ENCODE measurements at regions of chrX and their contacts with region 1.

Region 1: DNA sequence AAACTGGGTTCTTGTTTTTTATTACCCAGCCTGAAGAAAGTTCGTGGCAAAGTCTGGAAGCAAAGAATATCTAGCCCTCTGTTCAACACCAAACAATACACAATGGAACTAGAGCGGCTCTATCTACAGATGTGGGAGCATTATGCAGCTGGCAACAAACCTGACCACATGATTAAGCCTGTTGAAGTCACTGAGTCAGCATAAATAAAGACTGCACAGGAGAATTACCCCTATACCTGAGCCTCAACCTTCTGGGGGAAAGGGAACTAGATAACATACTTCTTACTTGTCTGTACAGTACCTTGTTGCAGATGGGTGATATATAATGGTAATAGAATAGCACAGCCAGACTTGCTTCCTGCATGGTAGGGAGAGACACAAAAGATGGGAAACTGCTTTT is 4.6 kb upstream of the GCNA start:
- DNase-seq: no peak
- H3K4me3 Mint-ChIP-seq: no peak overlapping the region
- H3K27ac Mint-ChIP-seq: peak overlapping the region; percentile 1
- H3K4me1 Mint-ChIP-seq: no peaks in the 10 kb centered on the region
- H3K27me3 Mint-ChIP-seq: no peaks in the 10 kb centered on the region

Region 2: DNA sequence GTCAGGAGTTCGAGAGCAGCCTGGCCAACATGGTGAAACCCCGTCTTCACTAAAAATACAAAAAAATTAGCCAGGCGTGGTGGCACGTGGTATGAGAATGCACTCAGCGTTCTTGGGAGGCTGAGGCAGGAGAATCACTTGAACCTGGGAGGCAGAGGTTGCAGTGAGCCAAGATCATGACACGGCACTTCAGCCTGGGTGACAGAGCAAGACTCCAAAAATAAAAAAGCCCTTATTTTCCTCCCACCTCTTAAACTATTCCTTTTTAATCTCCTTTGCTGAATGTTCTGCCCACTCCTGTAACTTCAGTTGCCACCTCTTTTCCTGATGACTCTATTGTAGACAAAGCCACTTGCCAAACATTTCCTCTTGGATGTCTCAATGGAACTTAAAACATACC is 134.8 kb before region 1 on chrX:
- CTCF ChIA-PET with region 1: no interaction called
- POLR2A ChIA-PET with region 1: no interaction called
- intact Hi-C with region 1: no loop called
- DNase-seq: no peak
- H3K4me3 Mint-ChIP-seq: no peak overlapping the region
- H3K27ac Mint-ChIP-seq: no peak overlapping the region
- H3K4me1 Mint-ChIP-seq: no peaks in the 10 kb centered on the region
- H3K27me3 Mint-ChIP-seq: no peaks in the 10 kb centered on the region

Region 3: DNA sequence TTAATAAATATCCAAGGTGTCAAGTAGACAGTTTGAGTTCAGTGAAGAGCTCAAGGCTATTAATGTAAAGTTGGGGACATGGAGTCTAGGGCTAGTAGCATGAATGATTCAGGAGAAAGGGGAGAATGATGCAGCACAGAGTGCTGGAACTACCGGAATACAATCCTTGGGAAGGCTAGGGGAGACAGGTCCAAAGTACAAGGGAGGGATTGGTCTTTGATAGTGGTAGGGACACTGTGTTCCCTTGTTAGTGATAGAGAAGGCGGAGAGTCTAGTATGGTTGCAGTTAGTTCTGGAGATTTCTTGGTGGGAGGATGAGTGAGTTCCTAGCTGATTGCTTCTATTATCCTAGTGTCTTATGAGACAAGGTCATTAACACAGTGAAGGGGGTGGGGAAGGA is 13.3 kb after region 1 on chrX:
- CTCF ChIA-PET with region 1: no interaction called
- POLR2A ChIA-PET with region 1: no interaction called
- intact Hi-C with region 1: no loop called
- DNase-seq: no peak
- H3K4me3 Mint-ChIP-seq: no peak overlapping the region
- H3K27ac Mint-ChIP-seq: peak overlapping the region; percentile 15
- H3K4me1 Mint-ChIP-seq: no peaks in the 10 kb centered on the region
- H3K27me3 Mint-ChIP-seq: no peaks in the 10 kb centered on the region

Region 4: DNA sequence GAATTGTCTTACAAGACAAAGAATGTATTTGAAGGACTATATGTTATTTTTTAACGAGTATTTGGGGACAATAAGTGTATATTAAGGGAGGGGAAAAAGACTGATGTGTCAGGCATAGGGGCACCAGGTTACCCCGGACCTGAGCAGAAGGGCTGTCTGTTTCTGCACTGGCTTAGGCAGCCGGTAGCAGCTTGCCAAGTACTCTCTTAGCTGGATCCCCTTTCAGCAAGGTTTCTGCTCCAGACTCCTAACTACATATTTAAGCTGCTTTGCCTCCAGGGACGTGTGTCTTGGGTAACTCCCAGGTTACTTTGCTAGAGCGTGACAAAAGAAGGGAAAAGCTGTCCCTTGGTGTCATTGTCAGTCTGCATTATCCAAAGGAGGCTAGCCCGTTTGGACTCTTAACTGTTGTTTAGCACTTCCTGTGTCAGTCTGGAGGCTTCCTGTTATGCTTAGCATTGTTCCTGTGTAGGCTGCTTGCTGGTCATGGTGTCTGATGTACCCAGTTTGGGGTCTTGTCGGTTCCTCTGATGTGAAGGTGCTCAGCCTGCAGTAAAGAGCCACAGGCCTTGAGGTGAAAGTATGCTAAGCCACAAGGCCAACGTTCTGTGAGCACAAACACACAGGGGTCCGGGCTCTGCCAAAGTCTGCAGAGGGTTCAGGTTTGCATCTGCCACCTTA is 33.1 kb after region 1 on chrX:
- CTCF ChIA-PET with region 1: no interaction called
- POLR2A ChIA-PET with region 1: no interaction called
- intact Hi-C with region 1: loop called (anchors 5 kb)
- DNase-seq: no peak
- H3K4me3 Mint-ChIP-seq: no peak overlapping the region
- H3K27ac Mint-ChIP-seq: peak overlapping the region; percentile 80
- H3K4me1 Mint-ChIP-seq: peaks cover 51% of the 10 kb centered on the region
- H3K27me3 Mint-ChIP-seq: no peaks in the 10 kb centered on the region